WTC11 (cell line): ENCODE measurements at regions of chr4 and their contacts with region 1.

Region 1: GRCh38 chr4:27684610-27685011 is 824.0 kb downstream of the STIM2 start:
- DNase-seq: peak; percentile 69
- ATAC-seq: peak; percentile 100
- H3K4me3 Mint-ChIP-seq: no peak overlapping the region
- H3K27ac Mint-ChIP-seq: peak overlapping the region; percentile 48; the same call in 1 of the 2 replicates
- H3K4me1 Mint-ChIP-seq: peaks cover 5% of the 10 kb centered on the region
- H3K27me3 Mint-ChIP-seq: no peaks in the 10 kb centered on the region
- CTCF ChIP-seq: peak; percentile 65

Region 2: GRCh38 chr4:27666943-27667342 is 17.7 kb before region 1 on chr4:
- CTCF ChIA-PET with region 1: interaction called, 12 read pairs
- POLR2A ChIA-PET with region 1: no interaction called
- DNase-seq: peak; percentile 20
- ATAC-seq: peak; percentile 89
- H3K4me3 Mint-ChIP-seq: no peak overlapping the region
- H3K27ac Mint-ChIP-seq: no peak overlapping the region
- H3K4me1 Mint-ChIP-seq: peaks cover 25% of the 10 kb centered on the region
- H3K27me3 Mint-ChIP-seq: no peaks in the 10 kb centered on the region
- CTCF ChIP-seq: no peak

Region 3: GRCh38 chr4:28073860-28074555 is 389.4 kb after region 1 on chr4:
- CTCF ChIA-PET with region 1: interaction called, 10 read pairs
- POLR2A ChIA-PET with region 1: no interaction called
- DNase-seq: peak; percentile 30
- ATAC-seq: peak; percentile 90
- H3K4me3 Mint-ChIP-seq: no peak overlapping the region
- H3K27ac Mint-ChIP-seq: no peak overlapping the region
- H3K4me1 Mint-ChIP-seq: peaks cover 13% of the 10 kb centered on the region
- H3K27me3 Mint-ChIP-seq: no peaks in the 10 kb centered on the region
- CTCF ChIP-seq: 0 out of 2 replicates have a peak, but pooled peaks have one; percentile 20